Pancreas (tissue), 10 donors: ENCODE measurements at regions of chr2 and their contacts with region 1.

Region 1: GRCh38 chr2:47437287-47437686 is 34.3 kb downstream of the MSH2 start:
- DNase-seq: no peak
- ATAC-seq: peak in 3 of 4 donors; percentile 59 to 70 (median 67)
- H3K4me3 ChIP-seq: no peak overlapping the region
- H3K27ac ChIP-seq: no peak overlapping the region
- H3K4me1 ChIP-seq: no peaks in the 10 kb centered on the region
- H3K27me3 ChIP-seq: no peaks in the 10 kb centered on the region
- CTCF ChIP-seq: peak in 2 of 4 donors; percentile 15 to 21

Region 2: DNA sequence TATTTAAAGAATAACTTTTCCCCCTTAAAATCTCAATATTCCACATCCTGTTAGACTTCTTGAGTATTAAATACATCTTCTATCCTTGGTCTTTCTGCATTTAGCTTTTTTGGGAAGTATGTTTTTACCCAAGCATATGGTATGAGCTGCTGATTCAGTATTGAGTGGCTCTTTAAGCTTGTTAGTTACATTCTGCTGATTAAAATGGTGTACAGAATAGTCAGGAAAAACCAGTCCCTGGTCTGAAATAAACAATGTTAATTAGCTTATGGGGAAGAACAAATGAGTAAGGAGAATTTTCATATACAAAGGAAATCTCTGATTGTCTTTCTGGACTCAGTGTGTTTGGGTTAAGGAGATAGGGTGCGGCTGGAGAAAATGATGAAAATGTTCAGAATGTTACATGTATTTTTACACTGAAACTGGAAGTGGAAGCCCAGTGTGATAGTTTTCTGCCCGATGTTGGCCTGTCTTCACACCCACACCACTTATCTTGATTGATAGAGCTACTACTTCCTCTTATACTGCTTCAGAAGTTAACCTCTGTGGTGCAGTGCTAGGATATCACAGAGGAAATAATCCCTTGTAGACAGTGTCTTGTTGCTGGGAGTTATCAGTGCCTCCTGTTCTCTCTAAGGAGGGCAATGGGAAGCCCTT is 49.7 kb after region 1 on chr2:
- intact Hi-C with region 1: no loop called
- DNase-seq: no peak
- ATAC-seq: peak in 2 of 4 donors; percentile 30 to 43
- H3K4me3 ChIP-seq: no peak overlapping the region
- H3K27ac ChIP-seq: no peak overlapping the region
- H3K4me1 ChIP-seq: no peaks in the 10 kb centered on the region
- H3K27me3 ChIP-seq: no peaks in the 10 kb centered on the region
- CTCF ChIP-seq: no peak

Region 3: GRCh38 chr2:47719099-47719498 is 281.8 kb after region 1 on chr2:
- intact Hi-C with region 1: no loop called
- DNase-seq: no peak
- ATAC-seq: no peak
- H3K4me3 ChIP-seq: no peak overlapping the region
- H3K27ac ChIP-seq: no peak overlapping the region
- H3K4me1 ChIP-seq: no peaks in the 10 kb centered on the region
- H3K27me3 ChIP-seq: no peaks in the 10 kb centered on the region
- CTCF ChIP-seq: no peak

Region 4: DNA sequence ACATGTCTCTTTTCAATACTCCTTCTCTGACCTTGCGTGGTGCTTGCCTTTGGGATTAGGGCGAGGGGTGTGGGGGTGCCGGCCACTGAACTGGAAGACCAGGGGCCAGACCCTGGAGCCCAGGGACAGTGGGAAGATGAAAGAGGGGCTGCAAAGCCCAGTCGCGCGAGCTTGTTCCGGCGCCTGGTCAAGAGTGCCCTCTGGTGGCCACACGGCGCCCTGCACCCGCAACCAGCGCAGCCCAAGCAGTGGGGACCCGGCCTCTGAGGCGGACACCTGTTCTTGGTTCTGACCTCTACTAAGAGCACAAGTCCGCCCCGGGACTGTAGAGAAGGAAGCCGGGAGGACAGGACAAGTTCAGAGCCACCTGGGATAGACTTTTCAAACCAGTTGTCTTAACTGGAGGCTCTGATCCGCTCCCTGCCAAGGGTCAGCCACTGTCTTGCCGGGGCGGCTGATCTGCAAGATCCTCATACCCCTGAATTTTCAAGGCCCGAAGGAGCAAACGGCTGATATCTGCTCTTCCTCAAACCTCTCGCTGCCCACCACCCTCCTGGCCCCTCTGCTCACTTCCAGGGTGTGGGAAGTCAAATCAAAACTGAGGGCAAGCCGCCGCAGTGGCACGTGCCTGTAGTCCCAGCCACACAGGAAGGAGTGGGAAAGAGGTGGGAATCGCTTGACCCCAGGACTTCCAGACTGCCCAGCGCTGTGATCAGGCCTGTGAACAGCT is 330.8 kb after region 1 on chr2:
- intact Hi-C with region 1: loop called in 2 of 3 experiments (anchors 5 kb)
- DNase-seq: peak; percentile 37 to 95 (median 76)
- ATAC-seq: peak; percentile 84 to 99 (median 96)
- H3K4me3 ChIP-seq: no peak overlapping the region
- H3K27ac ChIP-seq: no peak overlapping the region
- H3K4me1 ChIP-seq: no peaks in the 10 kb centered on the region
- H3K27me3 ChIP-seq: no peaks in the 10 kb centered on the region
- CTCF ChIP-seq: peak; percentile 97 to 99 (median 98)

Region 5: GRCh38 chr2:48107326-48107925 is 670.1 kb after region 1 on chr2:
- intact Hi-C with region 1: loop called in 1 of 3 experiments (anchors 5 kb)
- DNase-seq: no peak
- ATAC-seq: no peak
- H3K4me3 ChIP-seq: no peak overlapping the region
- H3K27ac ChIP-seq: no peak overlapping the region
- H3K4me1 ChIP-seq: peaks cover 0 to 6% (median 3%) of the 10 kb centered on the region in 3 donors
- H3K27me3 ChIP-seq: no peaks in the 10 kb centered on the region
- CTCF ChIP-seq: no peak